Esophagus squamous epithelium (tissue), 5 donors: ENCODE measurements at regions of chr20 and their contacts with region 1.

Region 1: DNA sequence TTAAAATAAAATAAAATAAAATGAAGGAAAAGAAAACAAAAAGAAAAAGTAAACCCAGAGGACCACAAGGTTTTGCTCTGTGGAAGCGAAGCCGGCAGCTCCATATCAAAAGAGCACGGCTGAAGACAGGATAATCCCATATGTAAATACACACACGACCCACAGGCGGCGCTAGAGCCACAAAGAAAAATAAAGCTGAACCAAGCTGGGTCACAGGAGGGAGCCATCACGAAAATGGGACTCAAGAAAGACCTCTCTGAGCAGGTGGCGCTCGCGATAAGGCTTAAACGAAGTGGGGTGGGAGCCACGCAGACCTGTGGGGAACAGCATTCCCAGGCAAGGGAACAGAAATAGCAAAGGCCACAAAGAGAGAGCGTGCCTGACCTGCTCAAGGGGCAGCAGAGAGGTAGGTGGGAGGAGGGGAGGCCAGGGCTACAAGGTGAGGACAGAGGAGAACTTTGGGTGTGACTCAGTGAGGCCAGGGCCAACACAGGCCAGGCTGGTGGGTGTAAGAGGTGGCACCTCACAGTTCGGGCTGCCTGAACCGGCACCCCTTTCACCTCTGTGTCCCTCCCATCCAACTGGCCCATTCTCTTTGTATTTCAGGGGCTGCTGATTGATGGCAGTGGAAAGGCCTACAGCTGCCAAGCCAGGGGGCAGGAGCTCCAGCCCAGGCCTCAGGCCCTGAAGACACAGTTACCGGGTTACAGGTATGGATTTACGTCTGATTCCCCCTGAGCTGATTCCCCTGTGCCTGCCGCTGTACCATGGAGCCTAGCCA is 26.0 kb downstream of the PTGIS start:
- DNase-seq: no peak
- H3K4me3 ChIP-seq: no peak overlapping the region
- H3K27ac ChIP-seq: peak overlapping the region in 3 of 4 donors; percentile 8 to 55 (median 22)
- H3K4me1 ChIP-seq: peaks cover 0 to 6% (median 0%) of the 10 kb centered on the region in 3 donors
- H3K27me3 ChIP-seq: peaks cover 0 to 18% (median 0%) of the 10 kb centered on the region in 4 donors
- CTCF ChIP-seq: peak; percentile 79 to 92 (median 89)
- POLR2A ChIP-seq: no peak

Region 2: GRCh38 chr20:49310705-49311104 is 231.2 kb before region 1 on chr20:
- intact Hi-C with region 1: no loop called
- DNase-seq: no peak
- H3K4me3 ChIP-seq: no peak overlapping the region
- H3K27ac ChIP-seq: no peak overlapping the region
- H3K4me1 ChIP-seq: peaks cover 0 to 9% (median 0%) of the 10 kb centered on the region in 3 donors
- H3K27me3 ChIP-seq: peaks cover 0 to 6% (median 0%) of the 10 kb centered on the region in 4 donors
- CTCF ChIP-seq: no peak
- POLR2A ChIP-seq: no peak

Region 3: DNA sequence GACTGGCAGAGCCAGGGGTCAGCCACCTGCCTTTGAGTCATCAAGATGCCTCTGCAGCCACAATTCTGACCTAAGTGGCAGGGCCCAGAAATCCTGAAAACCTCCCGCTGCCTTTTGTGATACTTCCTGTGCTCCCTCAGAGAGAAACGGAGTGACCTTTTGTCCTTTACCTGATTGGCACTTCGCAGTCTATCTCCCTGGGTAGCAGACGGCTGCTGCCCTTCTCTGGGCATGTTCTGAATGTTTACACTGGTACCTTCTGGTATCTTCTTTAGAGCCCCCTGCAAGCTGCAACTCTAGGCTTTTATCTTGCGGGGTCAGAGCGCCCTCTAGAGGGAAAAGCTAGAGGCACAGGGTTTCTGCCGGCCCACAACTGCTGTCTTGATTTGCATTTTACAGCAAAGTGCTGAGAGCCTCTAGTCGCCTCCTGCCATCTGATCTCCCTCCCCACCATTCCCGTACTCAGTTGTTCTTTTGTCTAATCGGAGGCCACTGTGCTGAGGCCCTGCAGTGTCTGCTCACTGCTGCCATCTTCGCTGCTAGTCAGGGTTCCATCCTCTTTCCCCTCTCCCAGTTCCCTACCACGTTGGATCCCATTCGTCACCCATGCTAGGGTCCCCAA is 346.5 kb after region 1 on chr20:
- intact Hi-C with region 1: loop called (anchors 10 kb)
- DNase-seq: no peak
- H3K4me3 ChIP-seq: no peak overlapping the region
- H3K27ac ChIP-seq: peak overlapping the region in 3 of 4 donors; percentile 33 to 79 (median 75)
- H3K4me1 ChIP-seq: peaks cover 0 to 70% (median 19%) of the 10 kb centered on the region in 3 donors
- H3K27me3 ChIP-seq: no peaks in the 10 kb centered on the region
- CTCF ChIP-seq: peak; percentile 66 to 76 (median 70)
- POLR2A ChIP-seq: no peak